OCI-LY7 (cell line): ENCODE measurements at regions of chr1 and their contacts with region 1.

Region 1: DNA sequence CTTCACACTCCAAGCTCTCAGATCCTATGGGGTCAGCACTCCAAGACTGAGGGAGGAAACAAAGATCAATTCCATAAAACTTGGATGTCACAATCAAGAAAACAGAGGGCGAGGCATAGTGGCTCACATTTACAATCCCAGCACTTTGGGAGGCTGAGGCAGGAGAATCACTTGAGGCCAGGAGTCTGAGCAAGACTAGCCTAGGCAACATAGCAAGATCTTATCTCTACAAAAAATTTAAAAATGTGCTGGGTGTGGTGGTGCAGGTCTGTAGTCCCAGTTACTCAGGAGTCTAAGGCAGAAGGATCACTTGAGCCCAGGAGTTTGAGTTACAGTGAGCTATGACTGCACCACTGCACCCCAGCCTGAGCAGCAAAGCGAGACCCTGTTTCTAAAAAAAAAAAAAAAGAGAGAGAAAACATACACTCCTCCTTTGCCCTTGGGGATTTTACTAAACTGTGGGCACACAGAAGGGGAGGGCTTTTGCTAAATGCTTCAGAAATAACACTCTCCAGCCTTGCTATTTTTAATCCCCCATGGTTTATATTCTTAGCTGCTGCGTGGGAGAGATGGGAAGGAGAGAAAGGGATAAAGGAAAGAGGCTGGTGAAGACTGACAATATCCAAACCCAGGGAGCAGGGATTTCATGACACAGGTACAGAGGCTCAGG is 18.1 kb downstream of the ARHGEF2 start:
- DNase-seq: peak; percentile 67
- H3K4me3 ChIP-seq: peak overlapping the region; percentile 33
- H3K27ac ChIP-seq: peak overlapping the region; percentile 72
- H3K4me1 ChIP-seq: peaks cover 42% of the 10 kb centered on the region
- CTCF ChIP-seq: no peak

Region 2: GRCh38 chr1:155761736-155762405 is 198.3 kb before region 1 on chr1:
- CTCF ChIA-PET with region 1: no interaction called
- POLR2A ChIA-PET with region 1: no interaction called
- intact Hi-C with region 1: no loop called
- DNase-seq: no peak
- H3K4me3 ChIP-seq: no peak overlapping the region
- H3K27ac ChIP-seq: no peak overlapping the region
- H3K4me1 ChIP-seq: no peaks in the 10 kb centered on the region
- CTCF ChIP-seq: no peak

Region 3: GRCh38 chr1:155946633-155947219 is 13.5 kb before region 1 on chr1:
- CTCF ChIA-PET with region 1: no interaction called
- POLR2A ChIA-PET with region 1: interaction called, 6 read pairs
- intact Hi-C with region 1: loop called (anchors 1 kb)
- DNase-seq: no peak
- H3K4me3 ChIP-seq: peak overlapping the region; percentile 37
- H3K27ac ChIP-seq: peak overlapping the region; percentile 96
- H3K4me1 ChIP-seq: peaks cover 60% of the 10 kb centered on the region
- CTCF ChIP-seq: no peak

Region 4: DNA sequence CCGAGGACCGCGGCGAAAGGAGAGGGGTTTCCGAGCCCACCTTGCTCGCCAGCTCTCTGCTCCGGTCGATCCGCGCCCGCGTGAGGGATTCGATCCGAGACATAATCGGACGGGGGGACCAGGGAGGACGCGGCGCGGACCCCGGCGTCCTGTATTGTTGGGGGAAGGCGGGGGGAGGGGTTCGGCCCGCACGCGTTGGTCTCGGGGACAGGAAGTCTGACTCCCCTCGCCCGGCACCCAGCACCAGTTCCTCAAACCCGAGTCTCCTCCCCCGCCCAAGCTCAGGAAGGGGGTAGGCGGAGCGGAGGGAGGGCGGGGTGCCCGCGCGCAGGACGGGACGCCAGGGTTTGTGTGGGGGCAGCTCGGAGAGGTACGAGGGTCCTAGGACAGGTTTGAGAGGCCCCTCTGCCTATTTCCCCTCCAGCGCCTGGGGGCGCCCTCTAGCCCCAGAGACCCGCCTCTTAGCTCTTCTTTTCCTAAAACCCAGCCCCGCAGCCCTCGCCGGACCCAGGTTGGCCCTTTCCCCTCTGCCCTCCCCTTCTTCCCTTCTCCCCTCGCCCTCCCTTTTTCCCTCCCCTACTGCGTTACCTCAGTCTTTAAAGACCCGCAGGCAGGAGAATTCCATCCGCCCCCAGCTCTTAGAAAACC is 18.2 kb after region 1 on chr1 and contains the start of gene ARHGEF2:
- CTCF ChIA-PET with region 1: interaction called, 4 read pairs
- POLR2A ChIA-PET with region 1: interaction called, 14 read pairs
- intact Hi-C with region 1: no loop called
- DNase-seq: peak; percentile 94
- H3K4me3 ChIP-seq: peak within 1 kb of the TSS; percentile 85
- H3K27ac ChIP-seq: peak within 1 kb of the TSS; percentile 94
- H3K4me1 ChIP-seq: peaks cover 68% of the 10 kb centered on the region
- CTCF ChIP-seq: peak; percentile 70
- total RNA-seq, gene ARHGEF2: 78.8 and 106 TPM in 2 replicates

Region 5: DNA sequence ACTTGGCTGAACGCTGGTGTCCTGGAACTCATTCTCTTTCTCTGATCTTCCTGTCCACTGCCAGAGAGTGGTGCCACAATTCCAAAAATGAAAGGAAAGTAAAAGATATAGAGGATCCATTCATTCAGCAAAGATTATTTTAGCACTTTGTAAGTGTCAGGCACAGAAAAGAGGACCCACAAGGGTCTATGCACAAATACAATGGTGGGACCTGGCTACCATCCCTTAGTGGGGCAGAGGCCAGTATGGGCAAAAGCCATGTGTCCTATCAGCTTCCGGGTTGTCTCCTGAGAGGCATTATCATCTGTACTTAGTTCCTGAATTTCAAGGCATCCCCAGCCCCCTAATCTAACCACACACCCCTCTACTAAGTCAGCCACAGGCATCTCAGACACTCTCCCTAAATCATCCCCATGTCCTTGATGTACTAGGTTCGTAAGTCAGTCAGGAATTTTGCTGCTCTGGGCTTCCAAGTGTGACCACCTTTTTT is 41.5 kb after region 1 on chr1:
- CTCF ChIA-PET with region 1: no interaction called
- POLR2A ChIA-PET with region 1: no interaction called
- intact Hi-C with region 1: no loop called
- DNase-seq: no peak
- H3K4me3 ChIP-seq: no peak overlapping the region
- H3K27ac ChIP-seq: no peak overlapping the region
- H3K4me1 ChIP-seq: no peaks in the 10 kb centered on the region
- CTCF ChIP-seq: no peak